Breast epithelium (tissue), 4 donors: ENCODE measurements at regions of chrX and their contacts with region 1.

Region 1: GRCh38 chrX:148133105-148133725 is 152.1 kb downstream of the FMR1NB start:
- DNase-seq: no peak
- H3K4me3 ChIP-seq: no peak overlapping the region
- H3K27ac ChIP-seq: no peak overlapping the region
- H3K4me1 ChIP-seq: no peaks in the 10 kb centered on the region
- H3K27me3 ChIP-seq: peaks cover 0 to 3% of the 10 kb centered on the region in 2 donors
- CTCF ChIP-seq: no peak
- POLR2A ChIP-seq: no peak

Region 2: DNA sequence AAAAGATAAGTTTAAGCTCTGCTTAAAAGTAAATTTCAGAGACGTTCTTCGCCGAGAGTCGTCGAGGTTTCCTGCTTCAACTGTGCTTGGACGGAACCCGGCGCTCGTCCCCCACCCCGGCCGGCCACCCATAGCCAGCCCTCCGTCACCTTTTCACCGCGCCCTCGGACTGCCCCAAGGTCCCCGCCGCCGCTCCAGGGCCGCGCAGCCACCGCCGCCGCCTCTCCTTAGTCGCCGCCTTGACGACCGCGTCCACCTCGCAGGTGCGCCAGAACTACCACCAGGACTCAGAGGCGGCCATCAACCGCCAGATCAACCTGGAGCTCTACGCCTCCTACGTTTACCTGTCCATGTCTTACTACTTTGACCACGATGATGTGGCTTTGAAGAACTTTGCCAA is 81.2 kb before region 1 on chrX:
- intact Hi-C with region 1: loop called (anchors 5 kb)
- DNase-seq: no peak
- H3K4me3 ChIP-seq: no peak overlapping the region
- H3K27ac ChIP-seq: no peak overlapping the region
- H3K4me1 ChIP-seq: no peaks in the 10 kb centered on the region
- H3K27me3 ChIP-seq: peaks cover 0 to 4% of the 10 kb centered on the region in 2 donors
- CTCF ChIP-seq: no peak
- POLR2A ChIP-seq: no peak